GM12878 (cell line): ENCODE measurements at regions of chrX and their contacts with region 1.

Region 1: DNA sequence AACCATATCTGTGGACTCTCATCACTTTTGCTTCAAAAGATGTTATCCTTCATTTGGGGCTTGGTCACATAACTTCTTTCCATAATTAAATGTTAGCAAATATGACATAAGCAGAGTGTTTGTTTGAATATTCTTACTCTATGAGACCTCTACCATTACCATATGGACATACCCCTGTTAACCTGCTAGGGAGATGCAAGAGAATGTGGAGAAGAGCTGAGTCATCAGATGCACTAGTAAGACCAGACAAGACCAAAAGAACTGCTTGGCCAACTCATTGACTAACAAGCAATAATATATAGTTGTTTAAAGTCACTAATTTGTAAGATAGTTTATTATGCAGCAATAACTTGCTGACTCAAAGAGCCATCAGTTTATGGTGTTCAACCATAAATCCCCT is 652.9 kb downstream of the SMARCA1 start:
- DNase-seq: no peak
- ATAC-seq: no peak
- H3K4me3 ChIP-seq: no peak overlapping the region
- H3K27ac ChIP-seq: no peak overlapping the region
- H3K4me1 ChIP-seq: no peaks in the 10 kb centered on the region
- H3K27me3 ChIP-seq: no peaks in the 10 kb centered on the region
- CTCF ChIP-seq: no peak
- EP300 ChIP-seq: no peak
- POLR2A ChIP-seq: no peak
- RAD21 ChIP-seq: no peak

Region 2: DNA sequence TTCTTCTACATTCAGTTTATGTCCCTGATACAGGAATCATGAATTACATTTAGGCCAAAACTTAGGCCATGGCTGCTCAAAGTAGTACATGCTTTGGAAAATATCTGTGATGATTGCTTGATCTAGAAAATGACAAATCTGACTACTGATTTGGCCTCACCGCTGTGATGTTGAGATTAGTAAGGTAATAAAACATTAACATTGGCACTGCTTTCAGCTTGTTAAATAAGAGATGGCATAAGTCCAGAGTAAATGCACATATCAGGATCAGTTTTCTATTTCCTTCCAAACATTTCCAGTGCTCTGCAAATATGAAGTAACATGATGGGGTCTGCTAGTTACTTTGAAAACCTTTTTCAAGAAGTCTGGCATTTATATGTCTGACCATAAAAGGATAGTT is 130.8 kb before region 1 on chrX:
- CTCF ChIA-PET with region 1: no interaction called
- POLR2A ChIA-PET with region 1: no interaction called
- RAD21 ChIA-PET with region 1: no interaction called
- SMC1A ChIA-PET with region 1: no interaction called
- in situ Hi-C with region 1: no loop called
- intact Hi-C with region 1: no loop called
- DNase-seq: no peak
- ATAC-seq: no peak
- H3K4me3 ChIP-seq: no peak overlapping the region
- H3K27ac ChIP-seq: no peak overlapping the region
- H3K4me1 ChIP-seq: no peaks in the 10 kb centered on the region
- H3K27me3 ChIP-seq: no peaks in the 10 kb centered on the region
- CTCF ChIP-seq: no peak
- EP300 ChIP-seq: no peak
- POLR2A ChIP-seq: no peak
- RAD21 ChIP-seq: no peak

Region 3: DNA sequence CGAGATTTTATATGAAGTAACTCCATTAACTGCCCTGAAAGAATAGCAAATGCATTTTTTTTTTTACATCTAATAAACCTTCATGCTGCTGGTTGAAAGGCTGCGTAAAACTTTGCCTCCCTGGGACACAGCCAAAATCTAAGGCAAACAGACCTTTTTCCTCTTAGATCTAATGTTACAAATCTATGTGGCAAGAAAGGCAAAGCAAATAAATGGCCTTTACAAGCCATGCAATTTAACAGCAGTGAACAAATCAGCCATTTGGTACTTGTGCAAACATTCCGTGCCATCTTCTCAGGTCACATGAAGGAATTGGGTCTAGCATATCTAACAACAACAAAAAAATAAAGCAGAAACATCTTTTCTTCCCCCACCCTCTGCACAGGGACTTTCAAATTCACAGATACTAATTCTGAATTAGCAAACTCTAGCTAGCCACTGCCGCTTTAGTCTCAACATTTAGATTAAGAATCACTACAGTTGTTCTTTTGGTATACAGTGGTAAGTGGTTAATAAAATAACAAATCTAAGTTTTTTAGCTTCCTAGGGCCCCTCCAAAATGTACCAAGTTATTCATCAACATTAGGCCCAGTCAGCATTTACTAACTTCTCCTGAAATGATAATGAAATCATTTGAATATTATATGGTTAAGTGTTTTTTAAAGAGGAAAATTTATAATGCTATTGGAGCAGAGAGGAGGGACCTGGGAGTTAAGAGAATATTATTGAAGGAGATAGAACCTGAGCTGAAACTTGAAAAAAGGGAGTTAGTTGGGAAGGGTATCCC is 59.1 kb after region 1 on chrX:
- CTCF ChIA-PET with region 1: no interaction called
- POLR2A ChIA-PET with region 1: no interaction called
- RAD21 ChIA-PET with region 1: no interaction called
- SMC1A ChIA-PET with region 1: no interaction called
- in situ Hi-C with region 1: no loop called
- intact Hi-C with region 1: loop called (anchors 10 kb)
- DNase-seq: no peak
- ATAC-seq: no peak
- H3K4me3 ChIP-seq: no peak overlapping the region
- H3K27ac ChIP-seq: no peak overlapping the region
- H3K4me1 ChIP-seq: no peaks in the 10 kb centered on the region
- H3K27me3 ChIP-seq: no peaks in the 10 kb centered on the region
- CTCF ChIP-seq: no peak
- EP300 ChIP-seq: no peak
- POLR2A ChIP-seq: no peak
- RAD21 ChIP-seq: no peak